Panc1 (cell line): ENCODE measurements at regions of chr6 and their contacts with region 1.

Region 1: GRCh38 chr6:154675602-154676088 is 57.6 kb upstream of the SCAF8 start:
- DNase-seq: peak; percentile 98
- ATAC-seq: peak; percentile 99
- H3K4me3 ChIP-seq: no peak overlapping the region
- H3K27ac ChIP-seq: no peak overlapping the region
- H3K4me1 ChIP-seq: no peaks in the 10 kb centered on the region
- H3K27me3 ChIP-seq: no peaks in the 10 kb centered on the region
- CTCF ChIP-seq: peak; percentile 99

Region 2: DNA sequence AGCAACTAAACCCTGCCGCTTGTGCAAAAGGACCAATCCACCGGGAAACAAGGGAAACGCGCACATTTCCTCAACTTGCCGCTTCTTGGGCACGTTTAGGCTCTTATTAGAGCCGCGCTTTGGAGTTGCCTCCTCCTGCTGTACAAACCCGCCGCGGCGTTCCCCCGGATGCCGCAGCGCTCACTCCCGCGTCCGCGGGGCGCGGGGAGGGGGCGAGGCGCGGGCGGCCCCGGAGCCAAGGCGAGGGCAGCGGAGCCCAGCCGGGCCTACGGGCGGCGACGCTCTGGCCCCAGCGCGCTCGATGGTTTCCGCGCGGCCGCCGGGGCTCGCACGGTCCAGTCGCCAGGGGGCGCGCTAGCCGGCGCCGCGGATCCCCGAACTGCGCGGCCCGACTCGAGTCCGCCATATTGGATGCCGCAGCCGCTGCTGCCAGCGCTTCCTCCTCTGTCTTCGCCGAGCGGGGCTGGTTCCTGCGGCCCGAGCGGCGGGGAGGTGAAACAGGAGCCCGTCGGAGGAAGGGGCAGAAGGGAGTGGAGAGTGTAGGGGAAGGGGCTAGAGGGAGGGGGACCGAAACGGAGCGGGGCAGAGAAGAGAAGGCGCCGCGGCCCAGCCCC is 57.5 kb after region 1 on chr6 and contains the start of gene SCAF8:
- CTCF ChIA-PET with region 1: no interaction called
- POLR2A ChIA-PET with region 1: no interaction called
- in situ Hi-C with region 1: no loop called
- intact Hi-C with region 1: loop called (anchors 5 kb)
- DNase-seq: no peak
- ATAC-seq: peak; percentile 87
- H3K4me3 ChIP-seq: peak within 1 kb of the TSS; percentile 81 to 82
- H3K27ac ChIP-seq: peak within 1 kb of the TSS; percentile 97
- H3K4me1 ChIP-seq: peaks cover 26% of the 10 kb centered on the region
- H3K27me3 ChIP-seq: no peaks in the 10 kb centered on the region
- CTCF ChIP-seq: peak; percentile 98
- total RNA-seq, gene SCAF8: 38.9 TPM

Region 3: GRCh38 chr6:154767003-154767723 is 91.5 kb after region 1 on chr6:
- CTCF ChIA-PET with region 1: no interaction called
- POLR2A ChIA-PET with region 1: no interaction called
- in situ Hi-C with region 1: no loop called
- intact Hi-C with region 1: no loop called
- DNase-seq: no peak
- ATAC-seq: 0 out of 2 replicates have a peak, but pooled peaks have one; percentile 28
- H3K4me3 ChIP-seq: no peak overlapping the region
- H3K27ac ChIP-seq: no peak overlapping the region
- H3K4me1 ChIP-seq: peaks cover 21% of the 10 kb centered on the region
- H3K27me3 ChIP-seq: no peaks in the 10 kb centered on the region
- CTCF ChIP-seq: no peak

Region 4: DNA sequence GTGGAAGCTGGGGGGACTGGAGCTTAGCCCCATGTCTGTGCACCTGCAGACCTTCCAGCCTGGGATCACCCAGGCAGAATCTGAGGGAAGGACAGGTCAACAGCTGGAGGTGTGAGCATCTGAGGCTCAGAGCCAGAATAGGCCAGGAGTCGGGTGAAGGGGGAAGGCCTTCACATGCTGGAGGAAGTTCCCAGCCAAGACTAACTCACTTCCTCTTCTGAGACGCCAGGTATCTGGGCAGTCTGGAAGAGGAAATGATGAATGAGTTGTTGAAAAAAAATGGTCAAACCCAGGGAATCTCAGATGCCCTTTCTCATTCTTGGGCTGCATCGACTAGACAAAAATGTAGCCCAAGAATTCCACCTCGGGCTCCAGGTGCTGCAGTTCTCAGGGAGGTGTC is 245.8 kb after region 1 on chr6:
- CTCF ChIA-PET with region 1: no interaction called
- POLR2A ChIA-PET with region 1: no interaction called
- in situ Hi-C with region 1: no loop called
- intact Hi-C with region 1: loop called (anchors 5 kb)
- DNase-seq: no peak
- ATAC-seq: no peak
- H3K4me3 ChIP-seq: no peak overlapping the region
- H3K27ac ChIP-seq: no peak overlapping the region
- H3K4me1 ChIP-seq: peaks cover 3% of the 10 kb centered on the region; the same call in 1 of the 2 replicates
- H3K27me3 ChIP-seq: no peaks in the 10 kb centered on the region
- CTCF ChIP-seq: no peak